ENCODE measurements at regions of chr14 and their contacts with region 1.

Region 1: DNA sequence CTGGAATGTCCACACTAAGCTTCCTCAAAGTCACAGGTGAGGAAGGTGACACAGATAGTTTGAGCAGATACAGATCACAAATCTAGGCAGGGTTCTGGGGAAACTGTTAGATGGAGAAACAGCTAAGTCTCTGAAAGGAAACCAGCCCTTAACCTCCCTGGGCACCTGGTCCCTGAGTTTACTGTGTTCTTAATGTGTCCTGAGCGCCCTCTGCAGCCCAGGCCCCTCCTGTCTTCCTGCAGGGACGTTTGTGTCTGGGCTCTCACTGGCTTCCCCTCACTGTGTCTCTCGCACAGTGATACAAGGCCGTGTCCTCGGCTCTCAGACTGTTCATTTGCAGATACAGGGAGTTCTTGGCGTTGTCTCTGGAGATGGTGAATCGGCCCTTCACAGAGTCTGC is 684.3 kb downstream of the TMEM121 start:
- DNase-seq: peak in 4 of 9 donors; percentile 29 to 45 (median 36)
- ATAC-seq: peak; percentile 58
- H3K4me3 ChIP-seq: no peak overlapping the region
- H3K4me3 Mint-ChIP-seq: peak overlapping the region in 2 of 10 donors; percentile 48 to 50
- H3K27ac ChIP-seq: no peak overlapping the region
- H3K27ac Mint-ChIP-seq: peak overlapping the region in 5 of 9 donors; percentile 9 to 88 (median 42)
- H3K4me1 ChIP-seq: peaks cover 0 to 12% of the 10 kb centered on the region in 2 donors
- H3K4me1 Mint-ChIP-seq: peaks cover 6 to 32% (median 22%) of the 10 kb centered on the region in 7 donors
- H3K27me3 ChIP-seq: no peaks in the 10 kb centered on the region
- H3K27me3 Mint-ChIP-seq: peaks cover 0 to 59% (median 0%) of the 10 kb centered on the region in 5 donors

Region 2: DNA sequence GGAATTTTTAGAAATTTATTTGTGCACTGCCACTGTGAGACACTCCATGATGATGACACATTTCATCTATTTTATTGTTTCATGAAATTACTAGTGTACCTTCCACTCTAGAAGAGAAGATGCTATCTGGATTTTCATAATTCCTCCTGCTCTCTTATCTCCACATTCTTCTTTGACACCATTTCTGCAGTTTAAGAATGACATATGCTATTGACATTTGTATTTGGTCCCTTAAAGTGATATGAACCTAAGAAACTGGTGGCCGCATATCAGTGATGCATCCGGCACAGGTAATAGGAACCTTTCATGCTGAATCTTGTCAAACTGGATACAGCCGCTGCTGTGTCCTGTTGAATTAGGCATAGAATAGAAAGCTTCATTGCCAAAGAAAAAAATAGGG is 12.1 kb after region 1 on chr14:
- CTCF ChIA-PET with region 1: interaction called, 153 read pairs
- POLR2A ChIA-PET with region 1: interaction called, 39 read pairs
- intact Hi-C with region 1: no loop called
- DNase-seq: no peak
- ATAC-seq: no peak
- H3K4me3 ChIP-seq: no peak overlapping the region
- H3K4me3 Mint-ChIP-seq: peak overlapping the region in 7 of 10 donors; percentile 1 to 73 (median 40)
- H3K27ac ChIP-seq: no peak overlapping the region
- H3K27ac Mint-ChIP-seq: peak overlapping the region in 7 of 9 donors; percentile 23 to 94 (median 85)
- H3K4me1 ChIP-seq: peaks cover 0 to 30% of the 10 kb centered on the region in 2 donors
- H3K4me1 Mint-ChIP-seq: peaks cover 14 to 85% (median 68%) of the 10 kb centered on the region in 7 donors
- H3K27me3 ChIP-seq: no peaks in the 10 kb centered on the region
- H3K27me3 Mint-ChIP-seq: peaks cover 0 to 8% (median 0%) of the 10 kb centered on the region in 5 donors

Region 3: DNA sequence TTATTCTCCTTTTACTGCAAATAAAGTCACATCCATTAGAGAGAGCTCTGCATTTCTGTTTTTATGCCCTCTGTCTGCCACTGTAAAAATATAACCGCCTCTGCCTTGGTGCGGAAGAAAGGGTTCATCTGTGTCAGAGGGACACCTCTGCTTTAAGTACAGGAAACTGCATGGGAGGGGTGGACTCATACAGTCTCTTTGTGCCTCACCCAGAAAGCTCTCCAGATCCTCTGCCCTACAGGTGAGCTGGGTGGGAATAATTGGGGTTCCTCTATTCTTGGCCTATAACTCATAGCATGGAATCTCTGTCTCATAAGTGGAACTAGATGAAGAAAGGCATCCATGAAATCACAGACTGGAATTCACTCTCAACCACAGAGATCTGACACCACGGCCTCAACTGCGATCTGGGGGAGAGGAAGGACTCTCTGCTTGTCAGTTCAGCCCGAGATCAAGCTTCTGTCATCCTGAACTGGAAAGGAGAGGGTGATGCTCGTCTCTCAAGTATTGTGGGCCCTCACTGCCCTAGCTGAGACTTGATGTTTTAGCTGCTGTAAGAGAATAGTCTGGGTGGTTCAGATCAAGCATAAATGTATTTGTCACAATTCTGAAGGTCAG is 18.0 kb after region 1 on chr14:
- CTCF ChIA-PET with region 1: interaction called, 153 read pairs
- POLR2A ChIA-PET with region 1: interaction called, 39 read pairs
- intact Hi-C with region 1: no loop called
- DNase-seq: peak in 7 of 9 donors; percentile 71 to 83 (median 79)
- ATAC-seq: peak; percentile 95
- H3K4me3 ChIP-seq: peak overlapping the region; percentile 55
- H3K4me3 Mint-ChIP-seq: peak overlapping the region; percentile 65 to 96 (median 88)
- H3K27ac ChIP-seq: peak overlapping the region; percentile 72
- H3K27ac Mint-ChIP-seq: peak overlapping the region; percentile 74 to 98 (median 94)
- H3K4me1 ChIP-seq: peaks cover 0 to 45% of the 10 kb centered on the region in 2 donors
- H3K4me1 Mint-ChIP-seq: peaks cover 31 to 93% (median 85%) of the 10 kb centered on the region in 7 donors
- H3K27me3 ChIP-seq: no peaks in the 10 kb centered on the region
- H3K27me3 Mint-ChIP-seq: no peaks in the 10 kb centered on the region

Region 4: GRCh38 chr14:106235356-106236159 is 24.9 kb after region 1 on chr14:
- CTCF ChIA-PET with region 1: interaction called, 153 read pairs
- POLR2A ChIA-PET with region 1: interaction called, 39 read pairs
- intact Hi-C with region 1: loop called in 1 of 2 experiments (anchors 1 kb)
- DNase-seq: no peak
- ATAC-seq: no peak
- H3K4me3 ChIP-seq: no peak overlapping the region
- H3K4me3 Mint-ChIP-seq: peak overlapping the region in 3 of 10 donors; percentile 21 to 52 (median 29)
- H3K27ac ChIP-seq: peak overlapping the region; percentile 29
- H3K27ac Mint-ChIP-seq: peak overlapping the region in 8 of 9 donors; percentile 7 to 89 (median 80)
- H3K4me1 ChIP-seq: peaks cover 7 to 22% of the 10 kb centered on the region in 2 donors
- H3K4me1 Mint-ChIP-seq: peaks cover 13 to 49% (median 43%) of the 10 kb centered on the region in 7 donors
- H3K27me3 ChIP-seq: no peaks in the 10 kb centered on the region
- H3K27me3 Mint-ChIP-seq: peaks cover 0 to 33% (median 8%) of the 10 kb centered on the region in 5 donors

Region 5: GRCh38 chr14:106268013-106268727 is 57.5 kb after region 1 on chr14:
- CTCF ChIA-PET with region 1: interaction called, 22 read pairs
- POLR2A ChIA-PET with region 1: no interaction called
- intact Hi-C with region 1: loop called in 1 of 2 experiments (anchors 1 kb)
- DNase-seq: peak; percentile 60 to 95 (median 87)
- ATAC-seq: peak; percentile 83
- H3K4me3 ChIP-seq: no peak overlapping the region
- H3K4me3 Mint-ChIP-seq: peak overlapping the region in 3 of 10 donors; percentile 6 to 37 (median 23)
- H3K27ac ChIP-seq: no peak overlapping the region
- H3K27ac Mint-ChIP-seq: peak overlapping the region in 5 of 9 donors; percentile 22 to 90 (median 76)
- H3K4me1 ChIP-seq: peaks cover 0 to 10% of the 10 kb centered on the region in 2 donors
- H3K4me1 Mint-ChIP-seq: peaks cover 0 to 16% (median 14%) of the 10 kb centered on the region in 7 donors
- H3K27me3 ChIP-seq: no peaks in the 10 kb centered on the region
- H3K27me3 Mint-ChIP-seq: peaks cover 0 to 57% (median 4%) of the 10 kb centered on the region in 5 donors

Region 6: DNA sequence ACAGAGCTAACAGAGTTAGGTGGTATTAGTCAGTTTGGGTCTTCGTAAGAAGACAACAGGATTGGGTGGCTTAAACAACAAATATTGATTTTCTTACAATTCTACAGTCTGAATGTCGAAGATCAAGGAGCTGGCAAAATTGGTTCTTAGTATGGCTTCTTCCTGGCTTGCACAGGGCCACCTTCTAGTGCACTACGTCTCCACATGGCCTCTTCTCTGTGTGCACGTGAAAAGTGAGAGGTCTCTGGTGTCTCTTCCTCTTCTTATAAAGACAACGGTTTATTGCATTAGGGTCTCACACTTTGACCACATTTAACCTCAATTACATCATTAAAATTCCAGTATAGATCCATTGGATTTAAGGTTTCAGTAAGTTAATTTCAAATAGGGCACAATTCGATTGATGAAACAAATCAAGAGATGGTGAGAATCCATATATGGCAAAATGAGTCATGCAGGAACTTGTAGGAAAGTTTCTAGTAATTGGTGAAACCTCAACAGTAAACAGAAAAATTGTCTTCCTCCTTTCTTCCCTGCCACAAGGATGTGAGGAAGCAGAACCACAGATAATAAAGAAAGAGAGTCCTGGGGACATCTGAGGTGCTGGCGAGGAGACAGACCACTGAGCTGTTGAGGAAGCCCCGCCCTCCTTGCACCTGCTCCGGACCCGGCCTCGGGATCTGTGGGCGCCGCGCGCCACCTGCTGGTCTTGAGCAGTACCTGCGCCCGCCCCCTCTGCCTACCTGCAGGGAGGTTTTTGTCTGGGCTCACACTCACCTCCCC is 162.4 kb after region 1 on chr14:
- CTCF ChIA-PET with region 1: interaction called, 15 read pairs
- POLR2A ChIA-PET with region 1: no interaction called
- intact Hi-C with region 1: loop called in 1 of 2 experiments (anchors 1 kb)
- DNase-seq: peak; percentile 59 to 78 (median 75)
- ATAC-seq: peak; percentile 92
- H3K4me3 ChIP-seq: no peak overlapping the region
- H3K4me3 Mint-ChIP-seq: peak overlapping the region in 9 of 10 donors; percentile 40 to 70 (median 60)
- H3K27ac ChIP-seq: no peak overlapping the region
- H3K27ac Mint-ChIP-seq: peak overlapping the region; percentile 12 to 78 (median 36)
- H3K4me1 ChIP-seq: peaks cover 0 to 8% of the 10 kb centered on the region in 2 donors
- H3K4me1 Mint-ChIP-seq: peaks cover 9 to 25% (median 21%) of the 10 kb centered on the region in 7 donors
- H3K27me3 ChIP-seq: no peaks in the 10 kb centered on the region
- H3K27me3 Mint-ChIP-seq: peaks cover 0 to 13% (median 4%) of the 10 kb centered on the region in 5 donors